GM10248 (cell line): ENCODE measurements at regions of chr2 and their contacts with region 1.

Region 1: DNA sequence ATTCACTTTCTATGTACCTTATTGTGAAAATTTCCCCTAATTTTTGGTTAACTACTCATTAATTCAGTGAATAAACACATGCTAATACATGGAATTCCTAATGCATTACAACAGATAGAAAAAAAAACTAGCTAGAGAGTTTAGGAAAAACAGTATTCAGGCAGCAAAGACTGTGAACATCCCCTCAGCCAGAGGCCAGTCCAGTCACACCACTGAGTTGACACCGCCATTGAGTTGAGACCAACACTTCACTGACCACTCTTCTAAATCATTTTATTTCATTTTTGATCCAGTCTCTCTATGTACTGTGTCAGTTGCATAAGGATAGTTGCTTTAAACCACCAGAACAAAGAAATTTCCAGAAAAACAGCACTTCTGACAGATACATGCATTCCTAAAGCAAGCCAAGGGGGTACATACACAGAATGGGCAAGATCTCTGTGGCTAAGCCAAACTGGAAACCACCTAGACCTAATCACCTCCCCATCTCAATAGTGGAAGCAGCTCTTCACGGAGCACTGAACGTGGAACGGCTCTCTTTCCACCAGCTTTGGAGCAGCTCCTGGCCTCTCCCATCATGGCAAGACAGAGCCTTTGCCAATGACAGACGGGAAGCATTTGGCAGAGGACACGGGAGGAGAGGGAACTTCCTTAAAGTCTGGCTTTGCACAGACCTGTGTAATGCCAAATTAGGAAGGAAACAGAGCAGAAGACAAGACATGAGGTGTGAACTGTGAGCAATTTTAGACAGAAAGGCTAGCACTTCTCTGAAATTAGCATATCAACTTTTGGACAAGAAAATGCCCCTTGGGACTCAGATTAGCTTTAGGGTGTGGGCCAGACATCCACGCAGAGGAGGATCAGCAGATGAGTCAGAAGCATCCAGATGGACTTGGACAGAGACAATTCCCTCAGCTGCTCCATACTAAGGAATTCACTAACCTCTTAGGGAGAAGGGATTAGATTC is 36.4 kb downstream of the CACNB4 start:
- DNase-seq: no peak
- CTCF ChIP-seq: no peak

Region 2: DNA sequence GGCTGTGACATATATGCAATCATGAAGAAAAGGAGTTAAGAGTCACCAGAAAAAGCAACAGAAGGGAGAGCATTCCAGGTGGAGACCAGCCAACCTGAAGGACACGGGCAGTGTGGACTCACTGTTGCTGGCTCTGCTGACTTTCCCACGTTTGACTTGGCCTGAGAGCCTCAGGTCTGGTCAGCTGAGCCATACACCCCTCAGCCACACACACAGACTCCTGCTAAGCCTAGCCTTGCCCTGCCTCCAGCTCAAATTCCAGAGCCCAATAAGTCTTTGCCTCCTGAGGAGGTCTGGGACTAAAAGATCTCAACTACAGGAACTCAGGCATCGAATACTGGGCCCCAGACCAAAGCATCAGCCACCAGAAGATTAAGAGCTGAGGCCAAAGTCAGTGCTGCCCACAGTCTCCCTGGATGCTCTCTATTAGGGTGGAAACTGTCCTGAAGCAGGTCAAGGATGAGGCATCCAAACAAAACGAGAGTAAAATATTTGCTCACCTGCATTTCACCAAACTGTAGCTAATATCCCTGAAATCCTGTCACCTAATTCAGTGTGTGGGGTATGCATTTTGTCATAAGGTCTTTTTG is 13.1 kb after region 1 on chr2:
- CTCF ChIA-PET with region 1: interaction called, 12 read pairs
- POLR2A ChIA-PET with region 1: no interaction called
- DNase-seq: no peak
- CTCF ChIP-seq: no peak